HEK293T (cell line): ENCODE measurements at regions of chr3 and their contacts with region 1.

Region 1: GRCh38 chr3:9878700-9879099 is 1.4 kb downstream of the CIDEC start:
- DNase-seq: no peak

Region 2: DNA sequence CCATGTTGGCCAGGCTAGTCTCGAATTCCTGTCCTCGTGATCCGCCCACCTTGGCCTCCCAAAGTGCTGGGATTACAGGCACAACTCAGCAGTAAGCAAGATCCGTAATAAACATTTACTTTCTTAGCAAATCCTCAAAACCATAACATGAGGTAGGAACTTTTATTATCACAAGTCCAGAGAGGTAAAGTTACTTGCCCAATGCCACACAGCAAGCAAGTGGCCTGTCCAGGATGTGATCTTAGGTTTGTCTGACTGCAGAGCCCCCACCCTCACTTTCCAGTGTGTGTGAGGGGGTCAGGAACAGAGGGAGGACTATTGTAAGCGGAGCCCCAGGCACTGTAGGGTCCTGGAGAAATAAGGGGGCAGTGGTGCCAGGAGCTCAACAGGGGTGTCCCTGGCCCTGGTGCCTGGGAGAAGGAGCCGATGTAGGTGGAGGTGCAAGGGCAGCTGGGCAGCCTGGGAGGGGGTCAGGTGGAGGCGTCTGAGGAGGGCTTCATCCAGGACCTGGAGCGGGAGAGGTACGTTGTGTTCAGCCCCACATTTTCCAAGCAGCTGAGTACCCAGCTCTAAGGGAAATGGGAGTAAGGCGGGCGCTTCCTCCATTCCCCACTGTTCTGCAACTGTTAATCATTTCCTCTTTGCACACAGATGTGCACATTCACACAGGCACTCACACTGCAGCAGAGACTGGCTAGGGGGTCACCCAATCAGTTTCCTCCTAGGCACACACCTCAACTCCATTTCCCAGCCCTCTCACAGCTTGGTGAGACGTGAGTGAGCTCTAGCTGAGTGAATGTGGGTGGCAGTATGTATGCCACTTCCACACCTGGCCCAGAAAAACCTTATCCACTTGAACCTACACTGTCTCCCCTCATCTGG is 40.8 kb before region 1 on chr3:
- CTCF ChIA-PET with region 1: no interaction called
- POLR2A ChIA-PET with region 1: no interaction called
- DNase-seq: no peak

Region 3: DNA sequence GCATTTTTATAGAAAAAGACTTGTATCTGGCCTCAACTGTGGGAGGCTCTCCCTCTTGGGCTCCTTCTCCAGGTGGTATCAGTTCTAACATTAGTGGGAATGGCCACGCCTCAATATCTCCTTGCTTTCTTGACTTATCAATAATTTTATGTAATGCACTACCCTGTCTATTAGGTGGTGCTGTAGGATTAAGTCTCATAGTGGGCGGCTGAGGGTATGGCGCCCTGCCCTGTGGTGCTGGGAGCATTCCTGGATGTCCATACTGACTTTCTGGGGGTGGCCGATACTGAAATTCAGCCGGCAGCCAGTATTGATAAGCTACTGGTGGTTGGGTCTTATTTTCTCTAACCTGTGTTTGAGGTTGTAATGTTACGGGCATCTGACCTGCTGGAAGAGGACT is 26.2 kb before region 1 on chr3:
- CTCF ChIA-PET with region 1: no interaction called
- POLR2A ChIA-PET with region 1: no interaction called
- DNase-seq: no peak

Region 4: DNA sequence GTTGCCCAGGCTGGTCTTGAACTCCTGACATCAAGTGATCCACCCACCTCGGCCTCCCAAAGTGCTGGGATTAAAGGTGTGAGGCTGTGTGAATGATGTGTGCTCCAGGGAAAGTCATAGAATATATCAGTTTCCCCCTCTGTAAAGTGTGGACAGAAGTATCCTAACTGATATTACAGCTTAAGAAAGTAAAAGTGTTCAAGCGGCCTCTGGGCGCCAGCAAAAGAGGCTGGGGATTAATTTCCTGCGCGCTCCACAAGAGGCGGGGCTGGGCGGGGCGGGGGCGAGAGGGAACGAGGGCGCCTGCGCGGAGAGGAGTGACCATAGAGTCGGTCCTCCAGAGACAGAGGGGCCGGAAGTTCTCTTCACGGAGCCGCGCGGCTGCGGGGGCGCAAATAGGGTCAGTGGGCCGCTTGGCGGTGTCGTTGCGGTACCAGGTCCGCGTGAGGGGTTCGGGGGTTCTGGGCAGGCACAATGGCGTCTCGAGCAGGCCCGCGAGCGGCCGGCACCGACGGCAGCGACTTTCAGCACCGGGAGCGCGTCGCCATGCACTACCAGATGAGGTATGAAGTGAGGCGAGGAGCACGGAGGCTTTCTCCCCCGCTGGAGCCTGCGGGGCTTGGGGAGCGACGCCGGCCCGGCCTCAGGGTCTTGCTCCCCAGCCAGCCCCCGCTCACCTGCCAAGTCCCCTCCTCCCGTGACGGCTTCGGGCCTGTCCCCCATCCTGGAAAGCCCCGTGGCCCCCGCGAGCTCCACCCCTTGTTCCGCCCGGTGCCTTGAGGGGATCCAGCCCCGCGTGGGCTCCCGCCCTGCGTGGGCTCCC is 11.8 kb after region 1 on chr3 and contains the start of gene JAGN1:
- CTCF ChIA-PET with region 1: interaction called, 3 read pairs
- POLR2A ChIA-PET with region 1: interaction called, 16 read pairs
- DNase-seq: peak; percentile 91